Psoas muscle (tissue), 8 donors: ENCODE measurements at regions of chr5 and their contacts with region 1.

Region 1: GRCh38 chr5:7245121-7245651 is 150.8 kb upstream of the ADCY2 start:
- DNase-seq: no peak
- ATAC-seq: no peak
- H3K4me3 ChIP-seq: no peak overlapping the region
- H3K27ac ChIP-seq: no peak overlapping the region
- H3K4me1 ChIP-seq: no peaks in the 10 kb centered on the region
- H3K27me3 ChIP-seq: no peaks in the 10 kb centered on the region
- CTCF ChIP-seq: no peak

Region 2: DNA sequence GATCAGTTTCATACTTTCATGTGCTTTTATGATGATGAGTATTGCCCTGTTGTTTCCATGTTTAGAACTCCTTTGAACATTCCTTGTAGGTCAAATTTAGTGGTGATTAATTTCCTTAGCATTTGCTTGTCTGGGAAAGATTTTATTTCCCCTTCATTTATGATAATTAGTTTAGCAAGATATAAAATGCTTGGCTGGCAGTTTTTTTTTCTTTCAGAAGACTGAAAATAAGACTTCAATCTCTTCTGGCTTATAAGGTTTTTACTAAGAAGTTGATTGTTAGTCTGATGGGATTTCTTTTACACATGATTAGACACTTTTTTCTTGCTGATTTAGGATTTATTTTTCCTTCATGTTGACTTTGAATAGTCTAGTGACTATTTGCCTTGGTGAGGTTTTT is 88.1 kb before region 1 on chr5:
- intact Hi-C with region 1: no loop called
- DNase-seq: no peak
- ATAC-seq: no peak
- H3K4me3 ChIP-seq: no peak overlapping the region
- H3K27ac ChIP-seq: no peak overlapping the region
- H3K4me1 ChIP-seq: no peaks in the 10 kb centered on the region
- H3K27me3 ChIP-seq: no peaks in the 10 kb centered on the region
- CTCF ChIP-seq: no peak

Region 3: GRCh38 chr5:7464182-7464581 is 219.0 kb after region 1 on chr5:
- intact Hi-C with region 1: loop called in 1 of 2 experiments (anchors 10 kb)
- DNase-seq: peak in 1 of 2 donors; percentile 57
- ATAC-seq: peak; percentile 89 to 97 (median 96)
- H3K4me3 ChIP-seq: no peak overlapping the region
- H3K27ac ChIP-seq: no peak overlapping the region
- H3K4me1 ChIP-seq: peaks cover 21% of the 10 kb centered on the region
- H3K27me3 ChIP-seq: no peaks in the 10 kb centered on the region
- CTCF ChIP-seq: no peak

Region 4: GRCh38 chr5:8254674-8255073 is 1009.5 kb after region 1 on chr5:
- intact Hi-C with region 1: no loop called
- DNase-seq: no peak
- ATAC-seq: no peak
- H3K4me3 ChIP-seq: no peak overlapping the region
- H3K27ac ChIP-seq: no peak overlapping the region
- H3K4me1 ChIP-seq: no peaks in the 10 kb centered on the region
- H3K27me3 ChIP-seq: no peaks in the 10 kb centered on the region
- CTCF ChIP-seq: no peak